ENCODE measurements at regions of chr1 and their contacts with region 1.

Region 1: GRCh38 chr1:45303582-45304310 is 22.9 kb upstream of the HPDL start:
- H3K4me3 ChIP-seq: peak overlapping the region; percentile 78
- H3K27ac ChIP-seq: peak overlapping the region; percentile 70
- H3K4me1 ChIP-seq: peaks cover 5% of the 10 kb centered on the region; the same call in 1 of the 2 replicates
- CTCF ChIP-seq: peak; percentile 100

Region 2: DNA sequence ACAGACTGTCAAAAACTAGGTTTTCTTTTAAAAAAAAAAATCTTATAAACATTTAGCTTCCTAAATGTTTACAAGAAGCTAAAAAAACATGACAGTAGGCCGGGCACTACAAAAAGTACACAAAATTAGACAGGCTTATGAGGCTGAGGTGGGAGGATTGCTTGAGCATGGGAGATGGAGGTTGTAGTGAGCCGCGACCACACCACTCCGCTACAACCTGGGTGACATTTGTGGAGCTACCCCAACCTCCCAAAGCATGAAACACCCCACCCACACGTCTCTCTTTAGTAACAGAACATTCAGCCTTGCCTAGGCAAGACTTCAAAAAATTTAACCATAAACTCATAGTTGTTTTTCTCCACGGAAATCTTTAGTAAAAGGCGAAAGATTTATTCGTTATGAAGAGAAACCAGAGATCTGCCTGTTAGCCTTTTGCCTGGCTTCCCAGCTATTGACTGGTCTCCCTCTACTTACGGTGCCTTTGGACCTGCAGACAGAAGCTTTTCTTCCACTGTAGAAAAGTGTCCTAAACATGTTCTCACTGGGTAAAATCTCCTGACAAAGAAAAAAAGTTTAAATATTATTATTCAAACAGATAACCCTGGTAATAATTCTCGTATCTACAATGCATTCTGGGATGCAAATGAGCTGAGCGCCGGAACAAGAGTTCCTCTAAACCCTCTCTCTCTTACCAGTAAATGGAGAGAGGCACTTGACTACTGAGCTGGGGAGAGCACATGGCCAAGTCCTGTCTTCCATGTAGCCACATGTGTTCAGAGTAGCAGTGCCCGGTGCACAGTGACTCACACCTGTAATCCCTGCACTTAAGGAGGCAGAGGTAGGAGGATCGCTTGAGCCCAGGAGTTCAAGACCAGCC is 582.0 kb before region 1 on chr1:
- CTCF ChIA-PET with region 1: interaction called, 4 read pairs
- POLR2A ChIA-PET with region 1: interaction called, 12 read pairs
- H3K4me3 ChIP-seq: no peak overlapping the region
- H3K27ac ChIP-seq: peak overlapping the region; percentile 57
- H3K4me1 ChIP-seq: no peaks in the 10 kb centered on the region
- CTCF ChIP-seq: no peak

Region 3: DNA sequence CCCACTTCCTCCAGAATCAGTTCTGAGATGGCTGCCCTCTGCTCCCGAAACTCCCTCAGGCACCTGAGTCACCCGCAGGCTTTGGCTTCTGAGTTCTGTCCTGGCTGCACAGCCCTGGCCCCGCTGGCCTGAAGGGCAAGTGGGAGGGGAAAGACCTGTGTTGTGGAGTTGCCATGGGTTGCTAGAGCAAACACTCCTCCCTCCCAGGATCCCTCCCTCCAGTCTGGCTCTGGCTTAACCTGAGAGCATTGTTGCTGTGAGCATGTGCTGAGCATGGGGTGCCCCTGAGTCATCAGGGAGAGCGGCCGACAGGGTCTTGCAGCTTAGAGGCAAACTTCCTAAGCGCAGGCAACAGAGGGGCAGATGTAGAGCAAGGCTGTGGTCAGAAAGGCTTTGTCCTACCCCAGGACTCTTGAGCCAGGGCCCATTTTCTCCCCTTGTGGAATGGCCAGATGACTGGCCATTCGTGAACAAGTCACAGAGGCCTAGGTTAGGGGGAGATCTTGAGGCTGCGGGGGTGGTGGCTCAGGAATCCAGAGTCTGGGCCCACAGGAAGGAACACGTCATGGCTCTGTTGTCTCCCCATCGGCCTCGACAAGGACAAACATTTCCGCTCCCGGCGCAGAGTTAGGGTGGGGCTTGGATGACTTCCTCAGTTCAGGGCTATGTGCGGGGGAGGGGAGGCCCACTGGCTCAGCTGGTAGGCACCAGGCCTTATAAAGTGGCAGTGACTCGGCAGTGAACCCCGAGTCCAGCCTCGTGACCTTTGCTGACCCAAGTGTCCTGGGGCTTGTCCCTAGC is 496.3 kb before region 1 on chr1 and contains the start of gene DYNLT4:
- CTCF ChIA-PET with region 1: interaction called, 4 read pairs
- POLR2A ChIA-PET with region 1: interaction called, 12 read pairs
- H3K4me3 ChIP-seq: peak within 1 kb of the TSS; percentile 1
- H3K27ac ChIP-seq: peak within 1 kb of the TSS; percentile 72
- H3K4me1 ChIP-seq: peaks cover 19% of the 10 kb centered on the region
- CTCF ChIP-seq: no peak

Region 4: GRCh38 chr1:45291716-45292115 is 12.0 kb before region 1 on chr1:
- CTCF ChIA-PET with region 1: interaction called, 10 read pairs
- POLR2A ChIA-PET with region 1: no interaction called
- H3K4me3 ChIP-seq: no peak overlapping the region
- H3K27ac ChIP-seq: no peak overlapping the region
- H3K4me1 ChIP-seq: no peaks in the 10 kb centered on the region
- CTCF ChIP-seq: no peak

Region 5: GRCh38 chr1:45339789-45340570 is 36.2 kb after region 1 on chr1 and contains the starts of genes MUTYH and TOE1:
- CTCF ChIA-PET with region 1: interaction called, 7 read pairs
- POLR2A ChIA-PET with region 1: interaction called, 62 read pairs
- H3K4me3 ChIP-seq: peak within 1 kb of the TSS; percentile 67
- H3K27ac ChIP-seq: peak within 1 kb of the TSS; percentile 75
- H3K4me1 ChIP-seq: no peaks in the 10 kb centered on the region
- CTCF ChIP-seq: no peak

Region 6: DNA sequence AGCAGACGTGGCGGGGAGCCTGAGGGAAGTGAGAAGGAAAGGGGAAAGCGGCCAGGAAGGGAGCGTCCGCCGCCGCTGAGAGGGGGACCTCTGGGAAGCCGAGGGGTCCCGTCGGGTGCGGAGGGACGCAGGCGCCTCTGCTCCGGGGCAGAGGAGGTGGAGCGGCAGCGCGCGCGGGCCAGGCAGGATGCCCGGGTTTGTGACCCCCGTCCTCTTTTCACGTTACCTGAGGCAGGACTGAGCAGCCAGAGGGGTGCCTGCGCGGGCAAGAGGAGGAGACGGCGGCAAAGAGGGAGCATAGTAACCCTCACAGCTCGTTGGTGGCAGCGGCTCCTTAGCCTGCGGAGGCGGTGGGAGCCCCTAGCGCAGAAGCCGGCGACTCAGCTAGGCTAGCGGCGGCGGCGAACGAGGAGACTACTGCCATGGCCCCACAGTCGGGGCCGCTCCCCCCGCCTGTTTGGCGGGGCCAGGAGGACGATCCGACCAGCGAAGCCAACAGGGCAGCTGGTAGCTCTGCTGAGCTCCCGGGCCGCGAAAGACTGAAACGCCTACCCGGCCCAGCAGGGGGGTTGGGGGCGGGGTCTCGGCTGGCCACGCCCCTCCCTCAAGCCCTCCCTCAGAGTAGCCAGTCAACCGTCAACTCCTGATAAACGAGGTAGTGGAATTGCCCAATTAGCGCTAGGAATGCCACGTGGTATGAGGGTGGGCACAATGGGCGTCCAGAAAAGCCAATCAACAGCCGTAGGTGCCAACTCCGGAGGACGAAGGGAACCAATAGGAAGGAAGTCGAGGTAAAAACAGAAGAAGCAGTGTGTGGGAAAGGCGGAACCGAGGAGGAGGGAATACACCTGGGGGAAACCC is 187.1 kb after region 1 on chr1 and contains the start of gene TESK2:
- CTCF ChIA-PET with region 1: interaction called, 8 read pairs
- POLR2A ChIA-PET with region 1: interaction called, 22 read pairs
- H3K4me3 ChIP-seq: peak within 1 kb of the TSS; percentile 92
- H3K27ac ChIP-seq: peak within 1 kb of the TSS; percentile 66; the same call in 1 of the 2 replicates
- H3K4me1 ChIP-seq: no peaks in the 10 kb centered on the region
- CTCF ChIP-seq: peak; percentile 25; the same call in 1 of the 2 replicates